ENCODE measurements at regions of chr12 and their contacts with region 1.

Region 1: GRCh38 chr12:92145731-92146496 is at the start of gene BTG1:
- DNase-seq: peak; percentile 100
- ATAC-seq: peak; percentile 72
- H3K4me3 ChIP-seq: peak within 1 kb of the TSS; percentile 89
- H3K27ac ChIP-seq: peak within 1 kb of the TSS; percentile 94
- H3K4me1 ChIP-seq: peaks cover 8% of the 10 kb centered on the region
- H3K27me3 ChIP-seq: no peaks in the 10 kb centered on the region
- CTCF ChIP-seq: no peak
- EP300 ChIP-seq: no peak; a peak in 2 of 4 replicates
- POLR2A ChIP-seq: peak; percentile 97
- RAD21 ChIP-seq: 0 out of 2 replicates have a peak, but pooled peaks have one; percentile 5
- polyA plus RNA-seq, gene BTG1: 23.7 to 61.5 TPM

Region 2: DNA sequence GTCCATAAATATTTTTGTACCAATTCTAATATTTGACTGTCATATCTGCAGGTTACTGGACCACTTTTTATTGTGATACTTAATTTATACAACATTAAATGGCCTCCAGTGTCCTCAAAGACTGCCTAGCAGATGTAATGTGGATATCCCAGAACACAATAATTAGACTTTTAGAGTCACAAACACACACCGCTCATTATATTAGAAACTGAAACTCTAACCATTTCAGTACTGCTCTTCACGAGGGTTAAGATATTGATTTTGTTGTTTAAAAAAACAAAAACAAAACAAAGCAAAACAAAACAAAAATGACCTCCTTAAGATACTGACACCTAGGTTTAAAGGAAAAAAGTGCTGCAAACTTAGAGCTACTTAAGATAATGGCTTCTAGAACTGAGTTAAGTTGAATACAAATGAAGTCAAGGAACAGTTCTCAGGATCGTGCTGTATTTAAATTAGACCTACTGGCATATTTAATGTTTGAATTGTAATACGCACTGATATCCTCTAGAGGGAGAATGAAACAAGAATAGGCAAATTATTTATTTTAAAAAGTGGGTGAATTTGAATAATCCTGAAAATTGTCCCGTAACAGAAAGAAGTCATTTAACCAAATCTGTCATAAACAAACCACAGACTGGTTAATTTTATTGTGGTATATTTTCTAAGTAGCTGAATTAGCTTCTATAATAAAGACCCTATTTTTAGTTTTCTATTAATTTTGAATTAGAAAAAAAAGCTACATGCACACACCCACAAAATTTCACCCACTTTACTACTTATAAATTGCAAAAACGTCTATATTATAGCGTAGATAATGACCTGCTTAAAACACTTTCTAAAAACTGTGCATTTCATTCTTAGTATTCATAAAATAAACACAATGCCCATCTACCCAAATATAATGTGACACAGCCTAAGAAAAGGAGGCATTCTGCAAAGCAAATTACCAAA is 568.1 kb before region 1 on chr12:
- CTCF ChIA-PET with region 1: no interaction called
- POLR2A ChIA-PET with region 1: no interaction called
- RAD21 ChIA-PET with region 1: interaction called, 3 read pairs
- SMC1A ChIA-PET with region 1: no interaction called
- in situ Hi-C with region 1: loop called (anchors 25 kb)
- intact Hi-C with region 1: loop called (anchors 5 kb)
- DNase-seq: no peak
- ATAC-seq: peak; percentile 73
- H3K4me3 ChIP-seq: no peak overlapping the region; the same call in 1 of the 2 replicates
- H3K27ac ChIP-seq: no peak overlapping the region
- H3K4me1 ChIP-seq: no peaks in the 10 kb centered on the region
- H3K27me3 ChIP-seq: no peaks in the 10 kb centered on the region
- CTCF ChIP-seq: peak; percentile 36 to 51 (median 41); a peak in 3 of 6 replicates
- EP300 ChIP-seq: no peak
- POLR2A ChIP-seq: no peak
- RAD21 ChIP-seq: peak; percentile 47; the same call in 1 of the 2 replicates

Region 3: GRCh38 chr12:92049403-92049802 is 96.5 kb before region 1 on chr12:
- CTCF ChIA-PET with region 1: no interaction called
- POLR2A ChIA-PET with region 1: interaction called, 4 read pairs
- RAD21 ChIA-PET with region 1: interaction called, 16 read pairs
- SMC1A ChIA-PET with region 1: interaction called, 4 read pairs
- in situ Hi-C with region 1: no loop called
- intact Hi-C with region 1: no loop called
- DNase-seq: peak; percentile 74
- ATAC-seq: peak; percentile 80
- H3K4me3 ChIP-seq: no peak overlapping the region
- H3K27ac ChIP-seq: no peak overlapping the region
- H3K4me1 ChIP-seq: peaks cover 24% of the 10 kb centered on the region
- H3K27me3 ChIP-seq: no peaks in the 10 kb centered on the region
- CTCF ChIP-seq: no peak
- EP300 ChIP-seq: peak in 1 of 2 experiments; percentile 33; a peak in 1 of 4 replicates
- POLR2A ChIP-seq: no peak
- RAD21 ChIP-seq: no peak

Region 4: GRCh38 chr12:92170050-92170449 is 24.1 kb after region 1 on chr12:
- CTCF ChIA-PET with region 1: interaction called, 6 read pairs
- POLR2A ChIA-PET with region 1: interaction called, 222 read pairs
- RAD21 ChIA-PET with region 1: interaction called, 127 read pairs
- SMC1A ChIA-PET with region 1: interaction called, 64 read pairs
- in situ Hi-C with region 1: no loop called
- intact Hi-C with region 1: no loop called
- DNase-seq: no peak
- ATAC-seq: no peak
- H3K4me3 ChIP-seq: no peak overlapping the region
- H3K27ac ChIP-seq: no peak overlapping the region
- H3K4me1 ChIP-seq: peaks cover 16% of the 10 kb centered on the region
- H3K27me3 ChIP-seq: no peaks in the 10 kb centered on the region
- CTCF ChIP-seq: no peak
- EP300 ChIP-seq: no peak
- POLR2A ChIP-seq: no peak
- RAD21 ChIP-seq: no peak

Region 5: GRCh38 chr12:92402415-92402814 is 256.5 kb after region 1 on chr12:
- CTCF ChIA-PET with region 1: interaction called, 12 read pairs
- POLR2A ChIA-PET with region 1: interaction called, 18 read pairs
- RAD21 ChIA-PET with region 1: interaction called, 54 read pairs
- SMC1A ChIA-PET with region 1: interaction called, 24 read pairs
- in situ Hi-C with region 1: loop called (anchors 5 kb)
- intact Hi-C with region 1: no loop called
- DNase-seq: no peak
- ATAC-seq: no peak
- H3K4me3 ChIP-seq: no peak overlapping the region
- H3K27ac ChIP-seq: peak overlapping the region; percentile 98
- H3K4me1 ChIP-seq: peaks cover 65% of the 10 kb centered on the region
- H3K27me3 ChIP-seq: no peaks in the 10 kb centered on the region
- CTCF ChIP-seq: no peak
- EP300 ChIP-seq: no peak
- POLR2A ChIP-seq: no peak
- RAD21 ChIP-seq: no peak

Region 6: DNA sequence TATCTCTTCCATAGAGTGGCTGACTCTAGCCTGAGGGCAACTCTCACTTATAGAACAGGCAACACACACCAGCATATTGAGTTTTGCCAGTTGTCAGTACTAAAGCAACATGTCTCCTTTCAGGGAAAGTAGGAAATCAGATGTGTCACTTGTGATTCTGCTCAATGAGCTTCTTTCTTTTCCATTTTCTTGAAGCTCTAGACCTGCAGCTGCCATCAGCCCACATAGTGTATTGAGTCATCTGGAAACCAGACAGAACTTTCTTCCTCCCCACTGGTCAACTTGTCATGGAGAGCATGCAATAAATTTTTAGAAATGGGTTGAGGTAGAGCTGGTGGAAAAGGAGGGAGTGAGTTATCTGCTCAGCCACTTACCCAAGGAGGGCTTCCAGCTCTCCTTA is 347.9 kb after region 1 on chr12:
- CTCF ChIA-PET with region 1: interaction called, 4 read pairs
- POLR2A ChIA-PET with region 1: interaction called, 5 read pairs
- RAD21 ChIA-PET with region 1: interaction called, 18 read pairs
- SMC1A ChIA-PET with region 1: interaction called, 3 read pairs
- in situ Hi-C with region 1: no loop called
- intact Hi-C with region 1: no loop called
- DNase-seq: no peak
- ATAC-seq: peak; percentile 57
- H3K4me3 ChIP-seq: no peak overlapping the region
- H3K27ac ChIP-seq: peak overlapping the region; percentile 81
- H3K4me1 ChIP-seq: peaks cover 74% of the 10 kb centered on the region
- H3K27me3 ChIP-seq: no peaks in the 10 kb centered on the region
- CTCF ChIP-seq: no peak
- EP300 ChIP-seq: peak in 1 of 2 experiments; percentile 36; a peak in 1 of 4 replicates
- POLR2A ChIP-seq: no peak
- RAD21 ChIP-seq: no peak

Region 7: GRCh38 chr12:92570056-92570753 is 424.3 kb after region 1 on chr12:
- CTCF ChIA-PET with region 1: interaction called, 18 read pairs
- POLR2A ChIA-PET with region 1: interaction called, 39 read pairs
- RAD21 ChIA-PET with region 1: interaction called, 67 read pairs
- SMC1A ChIA-PET with region 1: interaction called, 37 read pairs
- in situ Hi-C with region 1: loop called (anchors 5 kb)
- intact Hi-C with region 1: loop called (anchors 2 kb)
- DNase-seq: peak; percentile 93
- ATAC-seq: peak; percentile 94
- H3K4me3 ChIP-seq: no peak overlapping the region
- H3K27ac ChIP-seq: peak overlapping the region; percentile 55
- H3K4me1 ChIP-seq: peaks cover 11% of the 10 kb centered on the region; the same call in 1 of the 2 replicates
- H3K27me3 ChIP-seq: no peaks in the 10 kb centered on the region
- CTCF ChIP-seq: peak; percentile 47 to 76 (median 48); a peak in 5 of 6 replicates
- EP300 ChIP-seq: no peak
- POLR2A ChIP-seq: no peak
- RAD21 ChIP-seq: peak; percentile 81